ENCODE measurements at regions of chr7 and their contacts with region 1.

Region 1: GRCh38 chr7:154927624-154928143 is 75.2 kb downstream of the PAXIP1 start:
- DNase-seq: peak; percentile 82
- H3K4me3 Mint-ChIP-seq: peak overlapping the region; percentile 92
- H3K27ac Mint-ChIP-seq: peak overlapping the region; percentile 73
- H3K4me1 Mint-ChIP-seq: peaks cover 17% of the 10 kb centered on the region
- H3K27me3 Mint-ChIP-seq: peaks cover 27% of the 10 kb centered on the region

Region 2: GRCh38 chr7:154684666-154685563 is 242.8 kb before region 1 on chr7:
- CTCF ChIA-PET with region 1: no interaction called
- POLR2A ChIA-PET with region 1: no interaction called
- DNase-seq: no peak
- H3K4me3 Mint-ChIP-seq: no peak overlapping the region
- H3K27ac Mint-ChIP-seq: no peak overlapping the region
- H3K4me1 Mint-ChIP-seq: no peaks in the 10 kb centered on the region
- H3K27me3 Mint-ChIP-seq: no peaks in the 10 kb centered on the region

Region 3: GRCh38 chr7:154913638-154914312 is 13.9 kb before region 1 on chr7:
- CTCF ChIA-PET with region 1: interaction called, 30 read pairs
- POLR2A ChIA-PET with region 1: interaction called, 6 read pairs
- DNase-seq: peak; percentile 86
- H3K4me3 Mint-ChIP-seq: peak overlapping the region; percentile 17
- H3K27ac Mint-ChIP-seq: no peak overlapping the region
- H3K4me1 Mint-ChIP-seq: peaks cover 5% of the 10 kb centered on the region
- H3K27me3 Mint-ChIP-seq: peaks cover 12% of the 10 kb centered on the region

Region 4: GRCh38 chr7:154942691-154943090 is 15.0 kb after region 1 on chr7:
- CTCF ChIA-PET with region 1: interaction called, 11 read pairs
- POLR2A ChIA-PET with region 1: interaction called, 5 read pairs
- DNase-seq: no peak
- H3K4me3 Mint-ChIP-seq: no peak overlapping the region
- H3K27ac Mint-ChIP-seq: no peak overlapping the region
- H3K4me1 Mint-ChIP-seq: no peaks in the 10 kb centered on the region
- H3K27me3 Mint-ChIP-seq: no peaks in the 10 kb centered on the region

Region 5: GRCh38 chr7:154953006-154953684 is 25.5 kb after region 1 on chr7:
- CTCF ChIA-PET with region 1: interaction called, 27 read pairs
- POLR2A ChIA-PET with region 1: interaction called, 4 read pairs
- DNase-seq: peak; percentile 63
- H3K4me3 Mint-ChIP-seq: no peak overlapping the region
- H3K27ac Mint-ChIP-seq: no peak overlapping the region
- H3K4me1 Mint-ChIP-seq: no peaks in the 10 kb centered on the region
- H3K27me3 Mint-ChIP-seq: no peaks in the 10 kb centered on the region

Region 6: GRCh38 chr7:155003376-155004214 is 75.9 kb after region 1 on chr7:
- CTCF ChIA-PET with region 1: interaction called, 6 read pairs
- POLR2A ChIA-PET with region 1: interaction called, 15 read pairs
- DNase-seq: peak; percentile 85
- H3K4me3 Mint-ChIP-seq: peak overlapping the region; percentile 90
- H3K27ac Mint-ChIP-seq: peak overlapping the region; percentile 78
- H3K4me1 Mint-ChIP-seq: peaks cover 10% of the 10 kb centered on the region
- H3K27me3 Mint-ChIP-seq: no peaks in the 10 kb centered on the region

Region 7: GRCh38 chr7:155205368-155206317 is 278.0 kb after region 1 on chr7:
- CTCF ChIA-PET with region 1: interaction called, 9 read pairs
- POLR2A ChIA-PET with region 1: interaction called, 11 read pairs
- DNase-seq: peak; percentile 94
- H3K4me3 Mint-ChIP-seq: peak overlapping the region; percentile 88
- H3K27ac Mint-ChIP-seq: peak overlapping the region; percentile 99
- H3K4me1 Mint-ChIP-seq: peaks cover 44% of the 10 kb centered on the region
- H3K27me3 Mint-ChIP-seq: no peaks in the 10 kb centered on the region

Region 8: GRCh38 chr7:155322530-155322929 is 394.8 kb after region 1 on chr7:
- CTCF ChIA-PET with region 1: no interaction called
- POLR2A ChIA-PET with region 1: no interaction called
- DNase-seq: no peak
- H3K4me3 Mint-ChIP-seq: no peak overlapping the region
- H3K27ac Mint-ChIP-seq: no peak overlapping the region
- H3K4me1 Mint-ChIP-seq: no peaks in the 10 kb centered on the region
- H3K27me3 Mint-ChIP-seq: peaks cover 7% of the 10 kb centered on the region

Region 9: GRCh38 chr7:155344600-155345433 is 417.1 kb after region 1 on chr7:
- CTCF ChIA-PET with region 1: interaction called, 54 read pairs
- POLR2A ChIA-PET with region 1: interaction called, 6 read pairs
- DNase-seq: peak; percentile 84
- H3K4me3 Mint-ChIP-seq: peak overlapping the region; percentile 28
- H3K27ac Mint-ChIP-seq: no peak overlapping the region
- H3K4me1 Mint-ChIP-seq: peaks cover 4% of the 10 kb centered on the region
- H3K27me3 Mint-ChIP-seq: peaks cover 27% of the 10 kb centered on the region